Heart right ventricle (tissue), 16 donors: ENCODE measurements at regions of chr4 and their contacts with region 1.

Region 1: DNA sequence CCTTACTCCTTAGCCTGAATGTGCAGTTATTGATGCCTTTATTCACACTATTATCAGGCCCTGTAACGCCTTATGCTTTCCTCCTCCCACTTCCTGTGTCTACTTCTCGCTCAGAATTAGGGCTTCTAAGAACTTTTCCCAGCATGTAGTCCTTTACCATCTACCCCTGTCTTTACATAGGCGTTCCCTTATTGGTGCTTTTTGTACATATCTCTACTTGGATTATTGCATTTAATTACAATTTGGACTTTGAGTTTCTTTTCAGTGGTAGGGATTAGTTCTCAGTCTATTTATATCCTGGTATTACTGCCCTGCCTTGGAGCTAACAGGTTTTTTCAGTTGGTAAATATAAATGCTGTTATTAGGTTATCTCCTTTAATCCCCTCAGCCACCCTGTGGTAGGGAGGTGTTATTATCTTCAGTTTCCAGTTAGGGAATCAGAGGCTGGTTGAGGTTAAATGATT is 84.0 kb downstream of the RBPJ start:
- DNase-seq: no peak
- ATAC-seq: no peak
- H3K4me3 ChIP-seq: no peak overlapping the region
- H3K27ac ChIP-seq: no peak overlapping the region
- H3K4me1 ChIP-seq: peaks cover 0 to 8% (median 4%) of the 10 kb centered on the region in 9 donors
- H3K27me3 ChIP-seq: no peaks in the 10 kb centered on the region
- CTCF ChIP-seq: peak in 1 of 9 donors; percentile 12

Region 2: GRCh38 chr4:25767877-25768725 is 636.7 kb before region 1 on chr4:
- intact Hi-C with region 1: loop called in 1 of 10 experiments (anchors 5 kb)
- DNase-seq: peak; percentile 22 to 73
- ATAC-seq: peak in 7 of 8 donors; percentile 72 to 89 (median 88)
- H3K4me3 ChIP-seq: no peak overlapping the region
- H3K27ac ChIP-seq: no peak overlapping the region
- H3K4me1 ChIP-seq: peaks cover 0 to 16% (median 0%) of the 10 kb centered on the region in 9 donors
- H3K27me3 ChIP-seq: no peaks in the 10 kb centered on the region
- CTCF ChIP-seq: peak; percentile 54 to 87 (median 81)

Region 3: DNA sequence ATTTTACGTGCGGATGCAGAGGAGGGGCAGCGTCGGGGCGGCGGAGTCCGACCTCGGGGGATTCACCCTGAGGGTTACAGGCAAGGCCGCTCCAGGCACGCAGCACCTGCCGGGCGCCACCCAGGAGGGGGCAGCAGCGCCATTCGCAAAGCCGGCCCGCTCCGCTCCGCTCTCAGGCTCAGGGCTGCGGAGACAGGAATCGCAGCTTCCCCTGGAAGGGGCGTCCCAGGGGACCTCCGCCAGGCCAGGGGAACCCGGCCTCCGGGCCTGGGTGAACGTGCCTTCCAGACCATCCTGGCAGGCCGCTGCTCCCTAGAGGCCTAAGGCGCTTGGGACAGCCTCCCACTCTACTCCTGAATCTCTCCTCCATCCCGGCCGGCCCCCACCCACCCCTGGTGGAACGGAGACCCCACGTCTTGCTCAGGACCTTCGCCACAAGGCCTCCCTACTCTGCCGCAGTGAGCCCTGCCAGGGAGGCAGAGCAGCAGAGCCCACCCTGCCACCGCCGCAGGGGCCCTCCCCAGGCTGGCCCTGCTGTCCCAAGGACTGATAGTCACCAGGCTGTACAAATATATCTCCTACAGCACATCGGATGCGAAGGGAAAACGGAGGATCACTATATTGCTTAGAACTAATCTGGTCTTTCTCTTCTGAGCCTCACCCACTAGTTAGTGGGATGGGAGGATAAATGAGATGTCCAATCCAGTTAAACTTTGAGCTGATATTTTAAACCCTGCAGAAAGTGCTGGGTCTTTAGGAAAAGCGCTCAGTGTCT is 375.8 kb before region 1 on chr4:
- intact Hi-C with region 1: loop called in 2 of 10 experiments (anchors 2 kb)
- DNase-seq: peak; percentile 65 to 82
- ATAC-seq: peak; percentile 89 to 95 (median 93)
- H3K4me3 ChIP-seq: peak overlapping the region in 8 of 10 donors; percentile 4 to 37 (median 22)
- H3K27ac ChIP-seq: peak overlapping the region in 2 of 10 donors; percentile 20 to 58
- H3K4me1 ChIP-seq: peaks cover 0 to 37% (median 15%) of the 10 kb centered on the region in 9 donors
- H3K27me3 ChIP-seq: peaks cover 0 to 14% (median 11%) of the 10 kb centered on the region in 7 donors
- CTCF ChIP-seq: peak; percentile 41 to 86 (median 75)

Region 4: DNA sequence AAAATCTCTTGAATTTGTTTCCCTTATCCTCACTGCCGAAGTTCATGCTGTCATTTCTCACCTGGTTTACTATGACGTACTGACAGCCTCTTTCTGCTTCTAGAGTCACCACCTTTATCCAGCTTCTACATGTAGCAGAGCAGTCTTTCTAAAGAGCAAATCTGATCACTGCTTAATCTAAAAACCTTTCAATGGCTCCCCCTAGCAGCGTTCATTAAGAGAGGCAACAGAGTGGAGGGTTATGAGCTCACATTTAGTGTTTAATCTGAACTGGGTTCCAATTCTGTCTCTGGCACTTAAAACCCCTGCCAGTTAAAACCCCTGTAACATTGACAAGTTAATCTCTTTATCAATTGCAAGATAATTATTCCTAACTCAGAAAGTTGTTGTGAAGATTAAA is 79.6 kb before region 1 on chr4:
- intact Hi-C with region 1: loop called in 4 of 10 experiments (anchors 5 to 10 kb)
- DNase-seq: no peak
- ATAC-seq: no peak
- H3K4me3 ChIP-seq: no peak overlapping the region
- H3K27ac ChIP-seq: no peak overlapping the region
- H3K4me1 ChIP-seq: peaks cover 0 to 76% (median 45%) of the 10 kb centered on the region in 9 donors
- H3K27me3 ChIP-seq: no peaks in the 10 kb centered on the region
- CTCF ChIP-seq: peak in 2 of 9 donors; percentile 31 to 45